IMR-90 (cell line): ENCODE measurements at regions of chr2 and their contacts with region 1.

Region 1: GRCh38 chr2:207223051-207223450 is 57.3 kb upstream of the KLF7 start:
- DNase-seq: peak; percentile 87
- ATAC-seq: peak; percentile 84
- H3K4me3 ChIP-seq: no peak overlapping the region
- H3K27ac ChIP-seq: no peak overlapping the region
- H3K4me1 ChIP-seq: peaks cover 13% of the 10 kb centered on the region
- H3K27me3 ChIP-seq: no peaks in the 10 kb centered on the region
- CTCF ChIP-seq: no peak
- POLR2A ChIP-seq: no peak
- RAD21 ChIP-seq: peak; percentile 19; the same call in 1 of the 2 replicates

Region 2: GRCh38 chr2:207184348-207184747 is 38.7 kb before region 1 on chr2:
- CTCF ChIA-PET with region 1: no interaction called
- POLR2A ChIA-PET with region 1: no interaction called
- dilution Hi-C with region 1: no loop called
- in situ Hi-C with region 1: no loop called
- intact Hi-C with region 1: loop called (anchors 5 kb)
- DNase-seq: peak; percentile 77
- ATAC-seq: no peak
- H3K4me3 ChIP-seq: no peak overlapping the region
- H3K27ac ChIP-seq: 0 out of 2 replicates have a peak overlapping the region, but pooled peaks have one; percentile 14
- H3K4me1 ChIP-seq: peaks cover 17% of the 10 kb centered on the region
- H3K27me3 ChIP-seq: no peaks in the 10 kb centered on the region
- CTCF ChIP-seq: no peak
- POLR2A ChIP-seq: no peak
- RAD21 ChIP-seq: no peak